ENCODE measurements at regions of chr6 and their contacts with region 1.

Region 1: DNA sequence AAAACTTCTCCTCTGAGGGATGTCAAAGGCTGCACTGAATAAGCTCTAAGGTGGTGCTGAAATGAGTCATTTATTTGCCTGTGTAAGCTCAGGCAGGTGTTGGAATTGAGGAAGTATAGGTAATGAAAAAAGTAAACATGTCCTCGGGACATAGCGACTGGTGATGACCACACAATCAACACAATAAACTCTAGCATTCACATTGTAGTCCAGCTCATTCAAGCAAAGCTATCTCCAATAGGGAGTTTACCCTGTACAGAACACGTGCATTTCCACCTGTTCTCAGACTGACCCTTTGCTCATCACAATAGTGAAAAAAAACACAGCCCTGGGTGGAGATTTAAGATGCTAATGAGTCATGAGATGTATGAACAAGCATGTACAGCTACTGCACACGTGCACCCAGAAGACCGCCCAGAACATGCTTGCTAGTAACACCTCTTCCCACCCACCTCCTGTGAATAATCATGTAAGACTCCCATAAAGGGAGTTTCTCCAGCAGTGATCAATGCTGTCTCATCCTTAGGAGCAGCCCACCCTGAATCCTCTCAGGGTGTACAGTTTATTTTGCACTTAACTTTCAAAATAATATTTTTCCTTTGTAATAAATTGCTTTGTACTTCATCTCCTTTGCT is 33.0 kb upstream of the POU5F1 start:
- DNase-seq: peak; percentile 69
- H3K4me3 Mint-ChIP-seq: peak overlapping the region; percentile 84
- H3K27ac Mint-ChIP-seq: peak overlapping the region; percentile 99
- H3K4me1 Mint-ChIP-seq: peaks cover 61% of the 10 kb centered on the region
- H3K27me3 Mint-ChIP-seq: no peaks in the 10 kb centered on the region

Region 2: GRCh38 chr6:31222496-31222895 is 19.0 kb after region 1 on chr6:
- CTCF ChIA-PET with region 1: no interaction called
- intact Hi-C with region 1: no loop called
- DNase-seq: no peak
- H3K4me3 Mint-ChIP-seq: no peak overlapping the region
- H3K27ac Mint-ChIP-seq: peak overlapping the region; percentile 31
- H3K4me1 Mint-ChIP-seq: no peaks in the 10 kb centered on the region
- H3K27me3 Mint-ChIP-seq: no peaks in the 10 kb centered on the region

Region 3: DNA sequence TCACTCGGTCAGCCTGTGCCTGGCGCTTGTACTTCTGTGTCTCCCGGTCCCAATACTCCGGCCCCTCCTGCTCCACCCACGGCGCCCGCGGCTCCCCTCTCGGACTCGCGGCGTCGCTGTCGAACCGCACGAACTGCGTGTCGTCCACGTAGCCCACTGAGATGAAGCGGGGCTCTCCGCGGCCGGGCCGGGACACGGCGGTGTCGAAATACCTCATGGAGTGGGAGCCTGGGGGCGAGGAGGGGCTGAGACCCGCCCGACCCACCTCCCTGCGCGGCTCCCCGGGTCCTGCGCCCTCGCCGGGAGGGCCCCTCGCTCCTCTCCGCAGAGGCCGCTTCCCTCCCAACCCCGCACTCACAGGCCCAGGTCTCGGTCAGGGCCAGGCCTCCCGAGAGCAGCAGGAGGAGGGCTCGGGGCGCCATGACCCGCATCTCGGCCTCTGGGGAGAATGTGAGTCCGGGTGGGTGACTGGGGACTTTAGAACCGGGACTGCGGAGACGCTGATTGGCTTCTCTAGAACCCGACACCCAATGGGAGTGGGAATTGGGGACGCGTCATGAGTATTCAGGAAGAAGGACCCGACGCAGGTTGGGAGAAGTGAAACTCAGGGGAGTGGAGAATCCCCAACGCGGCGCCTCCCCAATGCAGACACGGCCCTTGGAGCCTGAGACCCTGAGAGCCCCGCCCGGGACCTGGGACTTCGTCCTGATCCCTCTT is 68.3 kb after region 1 on chr6 and contains the start of gene HLA-C:
- CTCF ChIA-PET with region 1: interaction called, 3 read pairs
- intact Hi-C with region 1: loop called (anchors 1 kb)
- DNase-seq: peak; percentile 96
- H3K4me3 Mint-ChIP-seq: peak within 1 kb of the TSS; percentile 98
- H3K27ac Mint-ChIP-seq: peak within 1 kb of the TSS; percentile 100
- H3K4me1 Mint-ChIP-seq: peaks cover 46% of the 10 kb centered on the region
- H3K27me3 Mint-ChIP-seq: peaks cover 4% of the 10 kb centered on the region
- total RNA-seq, gene HLA-C: 1,018 to 1,049 TPM

Region 4: DNA sequence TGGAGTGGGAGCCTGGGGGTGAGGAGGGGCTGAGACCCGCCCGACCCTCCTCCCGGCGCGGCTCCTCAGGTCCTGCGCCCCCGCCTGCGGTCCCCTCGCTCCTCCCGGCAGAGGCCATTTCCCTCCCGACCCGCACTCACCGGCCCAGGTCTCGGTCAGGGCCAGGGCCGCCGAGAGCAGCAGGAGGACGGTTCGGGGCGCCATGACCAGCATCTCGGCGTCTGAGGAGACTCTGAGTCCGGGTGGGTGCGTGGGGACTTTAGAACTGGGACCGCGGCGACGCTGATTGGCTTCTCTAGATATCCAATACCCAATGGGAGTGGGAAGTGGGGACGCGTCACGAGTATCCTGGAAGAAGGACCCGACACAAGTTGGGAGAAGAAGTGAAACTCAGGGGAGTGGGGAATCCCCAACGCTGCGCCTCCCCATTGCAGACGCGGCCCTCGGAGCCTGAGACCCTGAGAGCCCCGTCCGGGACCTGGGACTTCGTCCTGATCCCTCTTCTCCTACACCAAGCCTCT is 153.5 kb after region 1 on chr6 and contains the start of gene HLA-B:
- CTCF ChIA-PET with region 1: no interaction called
- intact Hi-C with region 1: loop called (anchors 1 kb)
- DNase-seq: peak; percentile 92
- H3K4me3 Mint-ChIP-seq: peak within 1 kb of the TSS; percentile 97
- H3K27ac Mint-ChIP-seq: peak within 1 kb of the TSS; percentile 100
- H3K4me1 Mint-ChIP-seq: peaks cover 54% of the 10 kb centered on the region
- H3K27me3 Mint-ChIP-seq: no peaks in the 10 kb centered on the region
- total RNA-seq, gene HLA-B: 3,225 to 3,295 TPM

Region 5: GRCh38 chr6:31366693-31367470 is 163.4 kb after region 1 on chr6:
- CTCF ChIA-PET with region 1: interaction called, 117 read pairs
- intact Hi-C with region 1: no loop called
- DNase-seq: peak; percentile 91
- H3K4me3 Mint-ChIP-seq: peak overlapping the region; percentile 76
- H3K27ac Mint-ChIP-seq: peak overlapping the region; percentile 15
- H3K4me1 Mint-ChIP-seq: peaks cover 30% of the 10 kb centered on the region
- H3K27me3 Mint-ChIP-seq: no peaks in the 10 kb centered on the region

Region 6: GRCh38 chr6:31462964-31463870 is 259.8 kb after region 1 on chr6:
- CTCF ChIA-PET with region 1: no interaction called
- intact Hi-C with region 1: loop called (anchors 5 kb)
- DNase-seq: peak; percentile 96
- H3K4me3 Mint-ChIP-seq: peak overlapping the region; percentile 99
- H3K27ac Mint-ChIP-seq: peak overlapping the region; percentile 98
- H3K4me1 Mint-ChIP-seq: peaks cover 58% of the 10 kb centered on the region
- H3K27me3 Mint-ChIP-seq: no peaks in the 10 kb centered on the region

Region 7: DNA sequence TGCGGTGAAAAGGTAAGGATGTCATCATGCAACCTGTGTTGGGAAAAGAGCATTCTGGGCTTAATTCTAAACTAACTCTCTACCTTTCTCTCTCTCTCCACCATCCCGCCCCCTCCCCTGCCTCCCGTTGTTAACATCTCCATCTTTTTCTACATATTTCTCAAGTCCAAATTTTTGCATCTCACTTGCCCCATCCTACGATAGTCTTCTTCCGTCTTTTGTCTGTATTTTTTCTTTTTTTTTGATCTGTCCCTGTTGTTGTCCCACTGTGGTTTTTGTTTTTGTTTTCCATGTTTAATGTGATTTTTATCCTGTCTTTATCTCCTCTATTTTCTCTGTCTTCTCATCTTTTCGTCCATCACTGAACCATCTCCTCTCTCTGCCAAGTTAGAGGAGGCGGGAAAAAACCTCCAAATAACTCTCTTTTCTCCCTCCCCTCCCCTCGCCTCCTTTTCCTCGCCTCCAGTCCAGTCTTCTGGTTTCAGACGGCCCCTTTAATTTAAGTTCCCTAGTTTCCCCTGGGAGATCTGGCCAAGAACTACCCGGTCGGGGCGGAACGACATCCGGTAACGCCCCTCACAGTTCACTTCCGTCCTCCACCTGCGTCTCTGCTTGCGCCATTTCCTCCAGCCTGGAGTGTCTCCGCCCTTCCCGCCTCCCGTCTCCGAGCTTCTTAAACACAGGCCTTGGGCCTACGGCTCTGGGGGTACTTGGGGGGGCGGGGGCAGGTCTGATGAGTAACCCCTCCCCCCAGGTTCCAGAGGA is 343.7 kb after region 1 on chr6 and contains the start of gene NFKBIL1:
- CTCF ChIA-PET with region 1: no interaction called
- intact Hi-C with region 1: no loop called
- DNase-seq: peak; percentile 96
- H3K4me3 Mint-ChIP-seq: peak within 1 kb of the TSS; percentile 88
- H3K27ac Mint-ChIP-seq: peak within 1 kb of the TSS; percentile 94
- H3K4me1 Mint-ChIP-seq: peaks cover 43% of the 10 kb centered on the region
- H3K27me3 Mint-ChIP-seq: no peaks in the 10 kb centered on the region
- total RNA-seq, gene NFKBIL1: 20.4 to 20.6 TPM

Region 8: DNA sequence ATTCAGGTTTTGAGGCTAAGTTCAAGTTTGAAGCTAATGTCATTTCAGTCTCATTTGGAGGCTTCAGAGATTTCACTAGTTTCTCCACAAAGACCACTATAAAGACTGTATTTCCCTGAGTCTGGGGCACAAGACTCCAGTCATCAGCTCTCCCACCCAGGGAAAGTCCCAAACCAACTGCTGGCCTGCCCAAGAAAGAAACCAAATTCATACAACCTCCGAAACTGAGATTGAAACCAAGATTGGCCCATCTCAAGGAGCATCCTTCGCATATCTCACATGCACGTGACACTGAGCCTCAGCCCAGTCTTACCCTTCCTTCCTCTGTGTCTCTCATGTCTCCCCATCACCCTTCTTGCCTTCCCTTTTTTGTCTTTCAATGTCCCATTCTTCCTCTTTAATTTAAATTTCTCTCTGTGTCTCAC is 365.1 kb after region 1 on chr6:
- CTCF ChIA-PET with region 1: no interaction called
- intact Hi-C with region 1: no loop called
- DNase-seq: peak; percentile 85
- H3K4me3 Mint-ChIP-seq: peak overlapping the region; percentile 34
- H3K27ac Mint-ChIP-seq: peak overlapping the region; percentile 83
- H3K4me1 Mint-ChIP-seq: peaks cover 76% of the 10 kb centered on the region
- H3K27me3 Mint-ChIP-seq: no peaks in the 10 kb centered on the region

Region 9: DNA sequence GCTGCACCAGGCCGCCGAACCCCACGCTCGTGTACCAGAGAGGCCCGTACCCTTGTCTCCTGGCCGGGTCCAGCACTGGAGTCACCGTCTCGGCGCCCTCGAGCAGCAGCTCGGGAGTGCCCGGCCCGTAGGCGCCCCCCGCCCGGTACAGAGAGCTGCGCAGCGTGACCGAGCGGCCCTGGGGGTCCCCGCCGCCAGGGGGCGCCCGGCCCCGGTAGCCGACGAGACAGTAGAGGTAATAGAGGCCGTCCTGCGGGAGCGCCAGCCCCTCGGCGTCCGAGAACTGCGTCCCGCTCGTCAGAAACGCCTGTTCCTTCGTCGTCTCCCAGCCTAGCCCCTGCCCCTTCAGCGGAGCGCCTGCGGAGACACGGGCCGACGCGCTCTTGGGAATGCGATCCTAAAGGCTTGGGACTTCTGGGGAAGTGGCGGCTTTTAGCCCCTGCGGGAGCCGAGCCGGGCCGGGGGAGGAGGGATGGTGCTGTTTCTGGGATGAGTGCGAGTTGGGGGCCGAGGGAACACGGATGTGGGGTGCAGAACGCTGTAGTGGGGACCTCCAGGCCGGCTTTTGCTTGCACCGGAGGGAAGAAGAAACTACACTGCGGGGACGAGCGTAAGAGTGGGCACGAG is 377.5 kb after region 1 on chr6:
- CTCF ChIA-PET with region 1: no interaction called
- intact Hi-C with region 1: loop called (anchors 5 kb)
- DNase-seq: peak; percentile 90
- H3K4me3 Mint-ChIP-seq: peak overlapping the region; percentile 99
- H3K27ac Mint-ChIP-seq: peak overlapping the region; percentile 99
- H3K4me1 Mint-ChIP-seq: peaks cover 50% of the 10 kb centered on the region
- H3K27me3 Mint-ChIP-seq: no peaks in the 10 kb centered on the region